CD4-positive, alpha-beta memory T cell (primary cell): ENCODE measurements at regions of chr18 and their contacts with region 1.

Region 1: DNA sequence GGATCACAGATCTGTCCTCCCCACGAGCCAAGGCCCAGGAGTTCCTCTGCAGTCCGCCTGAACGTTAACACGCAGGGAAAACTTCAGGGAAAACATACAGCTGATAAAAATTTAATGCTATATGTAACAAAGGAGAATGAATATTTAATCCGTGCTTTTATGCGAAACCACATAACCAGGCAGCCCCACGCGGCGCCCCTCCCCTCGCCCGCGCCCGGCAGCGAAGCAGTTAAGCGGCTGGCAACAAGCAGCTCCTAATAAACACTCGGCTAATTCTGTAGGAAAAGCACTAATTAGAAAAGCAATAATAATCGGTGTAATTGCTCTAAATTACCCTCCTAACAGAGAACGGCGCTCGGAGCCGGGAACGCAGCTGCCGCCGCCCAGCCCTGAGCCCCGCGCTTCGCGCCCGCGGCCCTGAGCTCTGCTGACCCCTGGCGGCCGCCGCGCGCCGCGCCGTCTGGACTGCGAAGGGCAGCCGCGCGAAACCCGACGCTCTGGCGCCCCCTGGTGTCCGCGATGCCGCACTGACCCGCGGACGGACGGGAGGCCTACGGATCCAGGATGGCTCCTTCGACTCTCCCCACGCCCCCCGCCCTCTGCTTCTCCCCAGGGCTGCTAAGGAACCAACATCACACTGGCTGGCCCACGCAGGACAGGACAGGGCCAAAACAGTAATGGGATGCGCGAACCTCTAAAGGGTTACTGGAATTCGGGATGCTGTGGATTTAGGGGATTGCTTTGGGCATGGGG is 181.4 kb downstream of the SMAD2 start:
- DNase-seq: peak; percentile 58 to 86 (median 82)
- H3K4me3 ChIP-seq: no peak overlapping the region
- H3K4me3 Mint-ChIP-seq: peak overlapping the region in 4 of 8 donors; percentile 15 to 74 (median 60)
- H3K27ac ChIP-seq: no peak overlapping the region
- H3K27ac Mint-ChIP-seq: peak overlapping the region in 1 of 7 donors; percentile 57
- H3K4me1 ChIP-seq: peaks cover 5% of the 10 kb centered on the region
- H3K4me1 Mint-ChIP-seq: peaks cover 0 to 5% (median 1%) of the 10 kb centered on the region in 4 donors
- H3K27me3 ChIP-seq: no peaks in the 10 kb centered on the region
- H3K27me3 Mint-ChIP-seq: peaks cover 0 to 2% of the 10 kb centered on the region in 2 donors

Region 2: GRCh38 chr18:47100214-47100831 is 648.7 kb before region 1 on chr18:
- CTCF ChIA-PET with region 1: interaction called, 35 read pairs
- POLR2A ChIA-PET with region 1: no interaction called
- intact Hi-C with region 1: no loop called
- DNase-seq: peak; percentile 48 to 64 (median 55)
- H3K4me3 ChIP-seq: no peak overlapping the region
- H3K4me3 Mint-ChIP-seq: no peak overlapping the region
- H3K27ac ChIP-seq: no peak overlapping the region
- H3K27ac Mint-ChIP-seq: no peak overlapping the region
- H3K4me1 ChIP-seq: no peaks in the 10 kb centered on the region
- H3K4me1 Mint-ChIP-seq: no peaks in the 10 kb centered on the region
- H3K27me3 ChIP-seq: no peaks in the 10 kb centered on the region
- H3K27me3 Mint-ChIP-seq: no peaks in the 10 kb centered on the region

Region 3: DNA sequence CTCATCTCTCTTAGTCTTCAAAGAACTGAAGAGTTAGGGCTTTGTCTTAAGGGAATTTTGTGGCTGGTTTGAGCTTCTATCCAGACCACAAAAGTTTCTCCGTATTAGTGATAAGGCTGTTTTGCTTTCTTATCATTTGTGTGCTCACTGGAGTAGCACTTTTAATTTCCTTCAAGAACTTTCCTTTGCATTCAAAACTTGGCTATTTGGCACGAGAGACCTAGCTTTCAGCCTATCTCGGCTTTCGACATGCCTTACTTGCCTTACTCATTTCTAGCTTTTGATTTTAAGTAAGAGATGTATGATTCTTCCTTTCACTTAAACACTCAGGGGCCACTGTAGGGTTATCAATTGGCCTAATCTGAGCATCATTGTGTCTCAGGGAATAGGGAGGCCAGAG is 628.6 kb before region 1 on chr18:
- CTCF ChIA-PET with region 1: no interaction called
- POLR2A ChIA-PET with region 1: no interaction called
- intact Hi-C with region 1: no loop called
- DNase-seq: no peak
- H3K4me3 ChIP-seq: no peak overlapping the region
- H3K4me3 Mint-ChIP-seq: no peak overlapping the region
- H3K27ac ChIP-seq: no peak overlapping the region
- H3K27ac Mint-ChIP-seq: no peak overlapping the region
- H3K4me1 ChIP-seq: no peaks in the 10 kb centered on the region
- H3K4me1 Mint-ChIP-seq: peaks cover 0 to 7% (median 5%) of the 10 kb centered on the region in 4 donors
- H3K27me3 ChIP-seq: no peaks in the 10 kb centered on the region
- H3K27me3 Mint-ChIP-seq: no peaks in the 10 kb centered on the region

Region 4: DNA sequence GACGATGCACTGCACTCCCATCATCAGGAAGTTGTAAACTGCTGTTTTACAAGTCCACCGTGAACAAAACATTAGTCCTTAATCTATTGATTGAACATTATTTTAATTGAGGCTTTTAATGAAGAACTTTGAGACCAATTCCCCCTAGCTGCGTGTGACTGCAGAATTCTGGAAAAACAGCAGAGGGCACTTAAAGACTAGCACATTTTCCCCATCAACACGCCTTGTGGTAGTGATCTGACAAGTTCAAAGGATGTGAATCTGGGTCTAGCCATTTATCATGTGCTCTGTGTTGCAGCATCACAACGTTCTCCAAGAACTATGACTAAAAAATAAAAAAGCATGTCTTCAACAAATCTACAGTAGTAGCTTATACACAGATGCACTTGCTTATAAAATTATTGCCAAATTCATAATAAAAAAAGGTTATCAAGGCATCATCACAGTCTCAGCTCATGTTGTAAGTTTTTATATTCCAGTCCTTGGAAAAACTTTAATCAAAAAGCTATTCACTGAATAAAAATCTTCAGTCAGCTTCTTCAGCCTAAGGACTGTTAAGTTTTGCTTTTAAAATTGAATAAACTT is 533.4 kb before region 1 on chr18:
- CTCF ChIA-PET with region 1: interaction called, 10 read pairs
- POLR2A ChIA-PET with region 1: no interaction called
- intact Hi-C with region 1: no loop called
- DNase-seq: peak in 3 of 5 donors; percentile 7 to 11 (median 9)
- H3K4me3 ChIP-seq: no peak overlapping the region
- H3K4me3 Mint-ChIP-seq: no peak overlapping the region
- H3K27ac ChIP-seq: no peak overlapping the region
- H3K27ac Mint-ChIP-seq: no peak overlapping the region
- H3K4me1 ChIP-seq: no peaks in the 10 kb centered on the region
- H3K4me1 Mint-ChIP-seq: no peaks in the 10 kb centered on the region
- H3K27me3 ChIP-seq: peaks cover 3% of the 10 kb centered on the region
- H3K27me3 Mint-ChIP-seq: peaks cover 24 to 41% of the 10 kb centered on the region in 2 donors

Region 5: GRCh38 chr18:47737956-47738355 is 11.1 kb before region 1 on chr18:
- CTCF ChIA-PET with region 1: interaction called, 21 read pairs
- POLR2A ChIA-PET with region 1: interaction called, 3 read pairs
- intact Hi-C with region 1: no loop called
- DNase-seq: no peak
- H3K4me3 ChIP-seq: no peak overlapping the region
- H3K4me3 Mint-ChIP-seq: no peak overlapping the region
- H3K27ac ChIP-seq: no peak overlapping the region
- H3K27ac Mint-ChIP-seq: no peak overlapping the region
- H3K4me1 ChIP-seq: no peaks in the 10 kb centered on the region
- H3K4me1 Mint-ChIP-seq: no peaks in the 10 kb centered on the region
- H3K27me3 ChIP-seq: no peaks in the 10 kb centered on the region
- H3K27me3 Mint-ChIP-seq: peaks cover 25 to 26% of the 10 kb centered on the region in 2 donors